GM10248 (cell line): ENCODE measurements at regions of chr7 and their contacts with region 1.

Region 1: GRCh38 chr7:7920481-7920880 is 48.1 kb upstream of the GLCCI1 start:
- DNase-seq: peak; percentile 52
- CTCF ChIP-seq: no peak

Region 2: DNA sequence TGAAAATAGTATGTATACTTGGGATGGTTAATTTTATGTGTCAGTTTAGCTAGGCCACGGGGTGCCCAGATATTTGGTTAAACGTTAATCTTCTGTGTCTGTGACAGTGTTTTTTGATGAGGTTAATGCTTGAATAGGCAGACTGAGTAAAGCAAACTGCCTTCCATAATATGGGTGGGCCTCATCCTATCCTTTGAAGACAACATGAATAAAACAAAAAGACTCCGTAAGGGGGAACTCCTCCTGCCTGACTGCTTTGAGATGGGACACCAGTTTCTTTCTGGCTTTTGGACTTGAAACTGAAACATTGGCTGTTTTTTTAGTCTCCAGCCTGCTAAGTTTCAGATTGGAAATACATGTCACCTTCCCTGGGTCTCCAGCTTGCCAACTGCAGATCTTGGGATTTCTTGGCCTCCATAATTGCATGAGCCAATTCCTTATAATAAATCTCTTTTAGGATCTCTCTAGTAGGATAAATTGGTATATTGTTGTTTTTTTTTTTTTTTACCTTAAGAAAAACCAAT is 11.8 kb before region 1 on chr7:
- CTCF ChIA-PET with region 1: interaction called, 14 read pairs
- POLR2A ChIA-PET with region 1: no interaction called
- DNase-seq: no peak
- CTCF ChIP-seq: no peak

Region 3: GRCh38 chr7:7959979-7960670 is 39.6 kb after region 1 on chr7:
- CTCF ChIA-PET with region 1: no interaction called
- POLR2A ChIA-PET with region 1: no interaction called
- DNase-seq: peak; percentile 49
- CTCF ChIP-seq: no peak